Activated CD4-positive, alpha-beta memory T cell treated with anti-CD3 and anti-CD28 coated beads for 36 hours (primary cell): ENCODE measurements at regions of chr9 and their contacts with region 1.

Region 1: DNA sequence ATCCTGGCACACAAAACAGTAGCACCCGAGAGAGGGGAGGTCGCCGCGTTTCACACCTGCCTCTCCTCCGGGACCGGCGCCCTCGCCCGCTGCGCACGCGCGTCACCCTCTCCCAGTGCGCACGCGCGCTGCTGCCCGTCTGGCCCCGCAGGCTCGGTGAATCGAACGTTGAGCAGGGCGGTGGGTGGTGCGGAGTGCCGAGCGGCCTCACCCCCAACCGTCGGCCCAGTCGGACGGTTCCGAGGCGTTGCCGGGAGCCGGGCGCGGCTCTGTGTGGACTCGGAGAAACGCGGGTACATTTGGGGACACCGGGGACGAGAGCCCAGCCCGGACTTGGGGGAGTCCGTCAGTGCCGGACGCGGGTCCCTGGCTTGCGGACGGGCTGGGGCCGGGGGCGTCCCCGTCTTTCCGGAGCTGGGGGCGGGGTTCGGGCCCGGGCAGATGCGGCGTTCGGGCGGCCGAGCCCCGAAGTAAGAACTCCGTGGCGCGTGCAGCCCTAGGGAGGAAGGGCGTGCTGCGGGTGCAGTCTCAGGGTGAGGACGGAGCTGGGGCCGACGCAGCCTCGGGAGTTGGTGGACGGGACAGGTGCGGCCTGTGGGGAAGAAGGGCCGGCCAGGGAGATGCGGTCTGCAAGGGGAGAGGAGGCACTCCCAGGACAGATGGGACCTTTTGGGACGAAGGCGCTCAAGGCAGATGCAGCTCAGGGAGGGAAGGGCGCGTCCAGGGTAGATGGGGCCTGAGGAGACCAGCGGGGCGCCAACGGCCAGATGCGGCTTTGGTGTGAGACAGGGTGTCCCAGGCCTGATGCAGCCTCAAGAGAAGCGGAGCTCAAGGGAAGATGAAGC is at the start of gene POMT1:
- DNase-seq: peak; percentile 92
- H3K4me3 Mint-ChIP-seq: peak within 1 kb of the TSS; percentile 97
- H3K27ac Mint-ChIP-seq: peak within 1 kb of the TSS; percentile 85
- H3K4me1 Mint-ChIP-seq: peaks cover 50% of the 10 kb centered on the region
- H3K27me3 Mint-ChIP-seq: no peaks in the 10 kb centered on the region
- total RNA-seq, gene POMT1: 42.8 to 43.2 TPM

Region 2: DNA sequence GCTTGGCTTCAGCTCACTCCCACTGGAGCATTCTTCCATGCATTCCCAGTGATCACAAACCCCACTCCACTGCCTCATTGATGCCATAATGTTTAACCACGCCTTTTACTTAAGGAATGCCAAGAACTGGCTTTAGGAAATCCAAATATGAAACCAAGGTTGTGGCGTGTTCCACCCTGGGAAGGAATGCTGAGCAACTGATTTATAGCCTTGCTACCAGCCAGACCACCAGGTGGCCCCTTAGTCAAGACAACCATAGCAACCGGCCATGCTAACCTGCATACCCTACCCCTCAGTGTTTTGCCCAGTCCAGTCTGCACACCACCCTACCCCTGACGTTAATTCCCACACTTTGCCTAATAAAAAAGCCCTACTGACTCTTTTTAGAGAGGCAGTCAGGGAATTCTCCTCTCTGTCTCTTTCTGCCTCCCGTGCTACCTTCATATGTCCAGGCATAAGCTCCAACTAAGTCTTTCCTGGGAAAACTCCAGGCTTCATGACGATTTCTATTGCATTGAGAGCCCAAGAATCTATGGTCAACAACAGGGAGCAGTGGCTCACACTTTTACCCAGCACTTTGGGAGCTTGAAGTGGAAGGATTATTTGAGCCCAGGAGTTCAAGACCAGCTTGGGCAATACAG is 136.1 kb before region 1 on chr9:
- CTCF ChIA-PET with region 1: no interaction called
- POLR2A ChIA-PET with region 1: no interaction called
- intact Hi-C with region 1: loop called (anchors 2 kb)
- DNase-seq: no peak
- H3K4me3 Mint-ChIP-seq: no peak overlapping the region
- H3K27ac Mint-ChIP-seq: no peak overlapping the region
- H3K4me1 Mint-ChIP-seq: peaks cover 1% of the 10 kb centered on the region
- H3K27me3 Mint-ChIP-seq: no peaks in the 10 kb centered on the region

Region 3: DNA sequence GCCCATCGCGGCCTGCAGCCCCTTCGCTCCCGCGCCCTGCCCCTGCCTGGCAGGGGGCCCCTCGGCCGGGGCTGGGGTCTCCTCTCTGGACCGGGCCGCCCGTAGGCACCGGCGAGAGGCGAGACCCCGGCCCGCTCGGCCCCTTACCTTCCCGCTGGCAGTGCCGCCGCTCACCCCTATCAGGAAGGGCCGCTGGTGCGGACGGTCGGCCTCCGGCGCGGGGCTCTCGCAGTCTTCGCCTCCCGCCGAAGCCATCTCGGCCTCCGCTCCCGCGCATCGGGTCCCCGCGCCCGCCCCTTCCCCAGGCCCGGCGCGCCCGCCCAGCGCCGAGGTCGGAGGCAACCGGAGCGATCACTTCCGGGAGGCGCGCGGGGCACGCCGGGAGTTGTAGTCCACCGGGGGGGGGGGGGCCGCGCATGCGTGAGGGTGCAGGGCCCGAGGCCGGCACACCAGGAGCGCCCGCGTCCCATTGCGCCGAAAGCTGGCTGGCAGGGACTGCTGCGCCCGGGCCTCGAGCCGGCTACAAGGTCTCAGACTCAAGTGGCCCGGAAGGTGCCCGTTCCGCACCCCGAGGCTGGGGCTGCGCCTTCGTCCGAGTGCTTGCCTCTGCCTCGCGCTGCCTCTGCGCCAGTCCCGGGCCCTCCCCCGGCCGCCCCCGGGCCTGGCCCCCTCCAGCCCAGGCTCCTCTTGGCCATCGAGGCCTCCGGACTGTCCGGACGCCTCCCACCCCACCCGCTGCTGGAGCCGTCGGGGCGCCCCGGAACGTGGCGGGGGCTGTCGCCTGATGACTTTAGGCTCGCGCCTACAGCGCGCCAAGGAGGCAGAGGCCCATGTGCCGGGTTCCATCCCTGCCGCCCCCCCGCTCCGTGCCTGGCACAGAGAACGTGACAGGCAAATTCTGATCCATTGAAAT is 28.2 kb after region 1 on chr9 and contains the start of gene UCK1:
- CTCF ChIA-PET with region 1: no interaction called
- POLR2A ChIA-PET with region 1: no interaction called
- intact Hi-C with region 1: loop called (anchors 2 kb)
- DNase-seq: peak; percentile 79
- H3K4me3 Mint-ChIP-seq: peak within 1 kb of the TSS; percentile 81
- H3K27ac Mint-ChIP-seq: peak within 1 kb of the TSS; percentile 45
- H3K4me1 Mint-ChIP-seq: peaks cover 26% of the 10 kb centered on the region
- H3K27me3 Mint-ChIP-seq: no peaks in the 10 kb centered on the region
- total RNA-seq, gene UCK1: 15.7 to 18.6 TPM

Region 4: GRCh38 chr9:131608493-131609037 is 105.6 kb after region 1 on chr9:
- CTCF ChIA-PET with region 1: no interaction called
- POLR2A ChIA-PET with region 1: no interaction called
- intact Hi-C with region 1: no loop called
- DNase-seq: no peak
- H3K4me3 Mint-ChIP-seq: no peak overlapping the region
- H3K27ac Mint-ChIP-seq: no peak overlapping the region
- H3K4me1 Mint-ChIP-seq: no peaks in the 10 kb centered on the region
- H3K27me3 Mint-ChIP-seq: no peaks in the 10 kb centered on the region

Region 5: GRCh38 chr9:131668439-131669268 is 165.7 kb after region 1 on chr9:
- CTCF ChIA-PET with region 1: no interaction called
- POLR2A ChIA-PET with region 1: no interaction called
- intact Hi-C with region 1: loop called (anchors 1 kb)
- DNase-seq: peak; percentile 86
- H3K4me3 Mint-ChIP-seq: peak overlapping the region; percentile 67
- H3K27ac Mint-ChIP-seq: peak overlapping the region; percentile 99
- H3K4me1 Mint-ChIP-seq: peaks cover 94% of the 10 kb centered on the region
- H3K27me3 Mint-ChIP-seq: no peaks in the 10 kb centered on the region

Region 6: DNA sequence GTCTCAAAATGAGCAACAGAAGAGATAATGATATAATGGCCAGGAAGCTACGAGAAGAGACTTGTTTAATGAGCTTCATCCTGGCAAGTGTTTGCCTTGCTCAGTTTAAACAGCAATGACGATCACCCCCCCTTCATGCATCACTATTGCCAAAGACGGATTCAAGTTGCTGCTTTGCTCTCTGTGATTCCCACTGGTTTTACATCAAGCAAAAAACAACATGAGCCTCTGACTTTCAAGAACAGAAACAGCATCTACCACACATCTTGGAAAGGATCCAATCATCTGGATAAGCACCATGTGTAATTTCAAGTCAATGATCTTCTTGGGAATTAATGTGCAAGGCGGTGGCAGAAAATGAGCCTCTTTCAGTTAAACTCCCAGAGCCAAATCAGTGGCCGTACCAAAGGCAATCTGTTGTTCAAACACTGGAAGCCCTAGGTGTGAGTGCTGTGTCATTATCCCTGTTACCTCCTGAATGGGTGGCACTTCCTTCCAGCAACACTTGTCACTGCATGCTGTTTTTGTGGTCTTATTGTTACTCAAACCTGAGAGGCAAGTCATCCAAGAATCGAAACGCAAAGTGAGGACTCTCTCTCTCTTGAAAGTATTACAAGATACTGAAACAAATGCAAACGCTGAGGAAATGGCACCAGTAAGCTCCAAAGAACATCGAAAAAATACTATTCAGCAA is 503.8 kb after region 1 on chr9:
- CTCF ChIA-PET with region 1: no interaction called
- POLR2A ChIA-PET with region 1: no interaction called
- intact Hi-C with region 1: loop called (anchors 2 kb)
- DNase-seq: peak; percentile 70
- H3K4me3 Mint-ChIP-seq: no peak overlapping the region
- H3K27ac Mint-ChIP-seq: peak overlapping the region; percentile 2
- H3K4me1 Mint-ChIP-seq: peaks cover 58% of the 10 kb centered on the region
- H3K27me3 Mint-ChIP-seq: no peaks in the 10 kb centered on the region